Endothelial cell of umbilical vein (primary cell): ENCODE measurements at regions of chr4 and their contacts with region 1.

Region 1: GRCh38 chr4:31045724-31046318 is 325.7 kb downstream of the PCDH7 start:
- DNase-seq: peak; percentile 74
- H3K4me3 ChIP-seq: no peak overlapping the region
- H3K27ac ChIP-seq: no peak overlapping the region
- H3K4me1 ChIP-seq: no peaks in the 10 kb centered on the region
- H3K27me3 ChIP-seq: no peaks in the 10 kb centered on the region
- CTCF ChIP-seq: peak; percentile 40 to 49
- POLR2A ChIP-seq: no peak

Region 2: DNA sequence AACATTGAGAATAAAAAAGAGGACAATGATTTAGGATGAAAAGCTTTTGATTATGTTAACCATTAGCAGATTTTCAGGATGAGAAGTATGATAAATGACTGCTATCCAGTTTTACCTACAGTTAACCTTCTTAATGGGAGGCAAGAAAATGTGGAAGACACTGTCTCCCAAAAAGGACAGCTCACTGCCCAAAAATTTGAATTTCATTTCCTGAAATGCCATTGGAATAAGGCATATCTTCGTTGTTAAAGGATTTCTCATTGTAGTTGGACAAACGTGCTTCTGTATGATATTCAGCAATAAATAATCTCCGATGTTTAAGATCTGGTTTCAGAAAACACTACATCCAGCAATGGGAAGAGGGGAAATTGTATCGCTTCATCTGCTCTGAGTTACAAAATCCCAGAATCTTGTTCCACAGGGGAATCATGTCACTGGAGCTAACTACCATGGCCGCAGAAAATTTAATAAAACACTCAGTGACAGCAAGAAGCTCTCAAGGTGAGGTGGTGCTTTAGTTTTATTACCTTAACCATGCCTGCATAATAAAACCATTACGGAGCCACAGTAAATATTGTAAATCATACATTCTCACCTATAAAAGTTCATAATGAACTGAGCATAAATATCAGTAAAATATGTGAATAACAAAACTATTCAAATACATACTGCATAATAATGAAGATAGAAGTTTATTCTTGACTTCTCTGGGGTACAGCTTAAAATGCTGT is 226.7 kb after region 1 on chr4:
- CTCF ChIA-PET with region 1: no interaction called
- POLR2A ChIA-PET with region 1: no interaction called
- dilution Hi-C with region 1: no loop called
- intact Hi-C with region 1: loop called (anchors 10 kb)
- DNase-seq: no peak
- H3K4me3 ChIP-seq: no peak overlapping the region
- H3K27ac ChIP-seq: no peak overlapping the region
- H3K4me1 ChIP-seq: no peaks in the 10 kb centered on the region
- H3K27me3 ChIP-seq: no peaks in the 10 kb centered on the region
- CTCF ChIP-seq: no peak
- POLR2A ChIP-seq: no peak

Region 3: DNA sequence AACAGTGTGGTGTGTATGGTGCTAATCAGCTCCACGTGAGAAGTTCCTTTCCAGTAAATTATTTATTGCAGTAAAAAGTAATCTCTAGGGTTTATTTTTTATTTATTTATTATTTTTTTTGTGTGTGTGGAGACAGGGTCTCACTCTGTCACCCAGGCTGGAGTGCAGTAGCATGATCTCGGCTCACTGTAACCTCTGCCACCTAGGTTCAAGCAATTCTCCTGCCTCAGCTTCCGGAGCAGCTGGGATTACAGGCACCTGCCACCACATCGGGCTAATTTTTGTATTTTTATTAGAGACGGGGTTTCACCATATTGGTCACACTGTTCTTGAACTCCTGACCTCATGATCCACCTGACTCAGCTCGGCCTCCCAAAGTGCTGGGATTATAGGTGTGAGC is 281.2 kb after region 1 on chr4:
- CTCF ChIA-PET with region 1: no interaction called
- POLR2A ChIA-PET with region 1: no interaction called
- dilution Hi-C with region 1: no loop called
- intact Hi-C with region 1: no loop called
- DNase-seq: no peak
- H3K4me3 ChIP-seq: no peak overlapping the region
- H3K27ac ChIP-seq: no peak overlapping the region
- H3K4me1 ChIP-seq: no peaks in the 10 kb centered on the region
- H3K27me3 ChIP-seq: no peaks in the 10 kb centered on the region
- CTCF ChIP-seq: no peak
- POLR2A ChIP-seq: no peak

Region 4: GRCh38 chr4:31370866-31371465 is 325.1 kb after region 1 on chr4:
- CTCF ChIA-PET with region 1: interaction called, 12 read pairs
- POLR2A ChIA-PET with region 1: no interaction called
- dilution Hi-C with region 1: no loop called
- intact Hi-C with region 1: loop called (anchors 1 kb)
- DNase-seq: peak; percentile 60
- H3K4me3 ChIP-seq: no peak overlapping the region
- H3K27ac ChIP-seq: no peak overlapping the region
- H3K4me1 ChIP-seq: no peaks in the 10 kb centered on the region
- H3K27me3 ChIP-seq: no peaks in the 10 kb centered on the region
- CTCF ChIP-seq: peak; percentile 53 to 62
- POLR2A ChIP-seq: no peak